Naive thymus-derived CD4-positive, alpha-beta T cell (primary cell): ENCODE measurements at regions of chr5 and their contacts with region 1.

Region 1: DNA sequence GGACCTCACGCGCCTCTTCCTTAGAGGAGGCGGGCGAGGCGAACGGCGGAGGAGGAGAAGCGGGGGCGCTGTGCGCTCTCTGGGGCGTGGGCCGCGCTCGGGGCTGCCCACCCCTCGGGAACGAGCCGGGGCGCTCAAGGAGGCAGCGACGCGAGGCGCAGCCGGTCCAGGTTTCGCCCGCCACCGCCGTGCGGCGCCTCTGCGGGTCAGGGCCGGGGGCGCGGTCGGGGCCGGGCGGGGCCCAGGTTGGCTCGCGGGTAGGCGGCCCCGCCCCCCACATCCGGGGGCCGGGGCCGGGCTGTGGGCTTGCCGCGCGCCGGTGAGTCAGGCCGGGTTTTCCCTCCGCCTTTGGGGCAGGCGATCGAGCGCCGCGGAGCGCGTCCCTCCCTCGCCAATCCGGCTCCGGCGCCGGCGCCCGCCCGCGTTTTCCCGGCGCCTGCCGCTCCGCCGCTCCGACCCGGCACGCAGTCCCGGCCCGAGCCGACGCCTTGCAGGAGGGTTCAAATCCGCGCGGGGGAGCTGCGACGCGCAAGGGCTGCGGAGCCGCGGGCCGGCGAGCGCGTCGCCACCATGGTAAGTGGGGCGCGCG is at the start of gene N4BP3:
- DNase-seq: peak; percentile 31 to 89 (median 56)
- ATAC-seq: peak; percentile 73
- H3K4me3 ChIP-seq: peak within 1 kb of the TSS; percentile 50
- H3K4me3 Mint-ChIP-seq: peak within 1 kb of the TSS; percentile 82 to 96 (median 87)
- H3K27ac ChIP-seq: no peak within 1 kb of the TSS
- H3K27ac Mint-ChIP-seq: peak within 1 kb of the TSS in 6 of 9 donors; percentile 10 to 81 (median 68)
- H3K4me1 ChIP-seq: peaks cover 38 to 43% of the 10 kb centered on the region in 2 donors
- H3K4me1 Mint-ChIP-seq: peaks cover 20 to 43% (median 34%) of the 10 kb centered on the region in 7 donors
- H3K27me3 ChIP-seq: no peaks in the 10 kb centered on the region
- H3K27me3 Mint-ChIP-seq: peaks cover 0 to 46% (median 8%) of the 10 kb centered on the region in 5 donors
- total RNA-seq, gene N4BP3: 0.79 to 3.5 (median 2.1) TPM

Region 2: GRCh38 chr5:177311723-177312648 is 801.3 kb before region 1 on chr5 and contains the start of gene MXD3:
- CTCF ChIA-PET with region 1: no interaction called
- POLR2A ChIA-PET with region 1: no interaction called
- intact Hi-C with region 1: no loop called
- DNase-seq: peak; percentile 87 to 97 (median 92)
- ATAC-seq: peak; percentile 95
- H3K4me3 ChIP-seq: peak within 1 kb of the TSS; percentile 77
- H3K4me3 Mint-ChIP-seq: peak within 1 kb of the TSS; percentile 78 to 93 (median 84)
- H3K27ac ChIP-seq: peak within 1 kb of the TSS; percentile 51
- H3K27ac Mint-ChIP-seq: peak within 1 kb of the TSS in 6 of 9 donors; percentile 42 to 92 (median 59)
- H3K4me1 ChIP-seq: peaks cover 21 to 22% of the 10 kb centered on the region in 2 donors
- H3K4me1 Mint-ChIP-seq: peaks cover 11 to 49% (median 32%) of the 10 kb centered on the region in 7 donors
- H3K27me3 ChIP-seq: no peaks in the 10 kb centered on the region
- H3K27me3 Mint-ChIP-seq: peaks cover 0 to 5% (median 0%) of the 10 kb centered on the region in 5 donors
- total RNA-seq, gene MXD3: 8.8 to 39.8 (median 18.3) TPM

Region 3: DNA sequence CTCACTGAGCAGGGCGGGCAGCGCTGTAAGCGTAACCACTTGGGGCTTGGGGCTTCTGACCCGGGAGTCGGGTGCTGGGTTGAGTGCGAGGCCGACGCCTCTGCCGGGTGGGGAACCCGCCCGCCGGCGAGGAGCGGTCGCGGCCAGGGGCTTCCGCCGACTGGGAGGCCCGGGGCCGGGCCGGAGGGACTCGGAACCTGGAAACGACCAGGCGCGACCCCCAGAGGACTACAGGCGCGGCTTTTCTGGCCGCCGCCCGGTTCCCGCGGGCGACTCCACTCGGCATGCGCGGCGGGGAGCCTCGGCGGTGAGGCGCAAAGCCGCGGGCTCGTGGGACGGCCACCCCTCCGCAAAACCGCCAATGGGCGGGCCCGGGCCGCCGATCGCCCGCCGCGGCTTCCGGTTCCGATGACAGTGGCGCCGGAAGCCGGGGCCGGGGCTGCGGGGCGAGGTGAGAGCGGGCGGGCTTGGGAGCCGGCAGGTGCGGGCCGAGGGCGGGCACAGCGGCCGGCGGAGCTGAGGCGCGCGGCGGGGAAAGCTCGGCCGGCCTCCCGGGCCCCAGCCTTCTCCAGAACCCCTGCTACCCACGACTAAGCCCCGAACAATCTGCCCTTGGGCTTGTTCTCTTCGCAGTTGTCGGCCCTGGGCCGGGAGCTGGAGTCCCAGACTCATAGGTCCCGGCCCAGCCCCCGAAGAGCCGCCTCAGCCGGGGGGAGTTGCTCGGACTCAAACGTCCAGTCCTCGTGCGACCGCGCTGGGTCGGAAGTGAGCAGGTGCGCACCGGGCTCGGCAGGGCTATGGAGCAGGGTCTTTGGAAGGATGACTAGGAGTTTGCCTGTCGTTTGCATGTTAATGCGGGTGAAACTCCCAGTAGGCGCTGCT is 17.6 kb after region 1 on chr5 and contains the start of gene RMND5B:
- CTCF ChIA-PET with region 1: no interaction called
- POLR2A ChIA-PET with region 1: interaction called, 8 read pairs
- intact Hi-C with region 1: loop called (anchors 1 kb)
- DNase-seq: peak; percentile 72 to 91 (median 79)
- ATAC-seq: peak; percentile 94
- H3K4me3 ChIP-seq: peak within 1 kb of the TSS; percentile 71
- H3K4me3 Mint-ChIP-seq: peak within 1 kb of the TSS; percentile 75 to 95 (median 86)
- H3K27ac ChIP-seq: peak within 1 kb of the TSS; percentile 84
- H3K27ac Mint-ChIP-seq: peak within 1 kb of the TSS; percentile 51 to 97 (median 93)
- H3K4me1 ChIP-seq: peaks cover 5 to 8% of the 10 kb centered on the region in 2 donors
- H3K4me1 Mint-ChIP-seq: peaks cover 16 to 39% (median 27%) of the 10 kb centered on the region in 7 donors
- H3K27me3 ChIP-seq: no peaks in the 10 kb centered on the region
- H3K27me3 Mint-ChIP-seq: peaks cover 0 to 4% (median 0%) of the 10 kb centered on the region in 5 donors
- total RNA-seq, gene RMND5B: 21.0 to 42.7 (median 23.3) TPM